AG04450 (cell line): ENCODE measurements at regions of chr6 and their contacts with region 1.

Region 1: DNA sequence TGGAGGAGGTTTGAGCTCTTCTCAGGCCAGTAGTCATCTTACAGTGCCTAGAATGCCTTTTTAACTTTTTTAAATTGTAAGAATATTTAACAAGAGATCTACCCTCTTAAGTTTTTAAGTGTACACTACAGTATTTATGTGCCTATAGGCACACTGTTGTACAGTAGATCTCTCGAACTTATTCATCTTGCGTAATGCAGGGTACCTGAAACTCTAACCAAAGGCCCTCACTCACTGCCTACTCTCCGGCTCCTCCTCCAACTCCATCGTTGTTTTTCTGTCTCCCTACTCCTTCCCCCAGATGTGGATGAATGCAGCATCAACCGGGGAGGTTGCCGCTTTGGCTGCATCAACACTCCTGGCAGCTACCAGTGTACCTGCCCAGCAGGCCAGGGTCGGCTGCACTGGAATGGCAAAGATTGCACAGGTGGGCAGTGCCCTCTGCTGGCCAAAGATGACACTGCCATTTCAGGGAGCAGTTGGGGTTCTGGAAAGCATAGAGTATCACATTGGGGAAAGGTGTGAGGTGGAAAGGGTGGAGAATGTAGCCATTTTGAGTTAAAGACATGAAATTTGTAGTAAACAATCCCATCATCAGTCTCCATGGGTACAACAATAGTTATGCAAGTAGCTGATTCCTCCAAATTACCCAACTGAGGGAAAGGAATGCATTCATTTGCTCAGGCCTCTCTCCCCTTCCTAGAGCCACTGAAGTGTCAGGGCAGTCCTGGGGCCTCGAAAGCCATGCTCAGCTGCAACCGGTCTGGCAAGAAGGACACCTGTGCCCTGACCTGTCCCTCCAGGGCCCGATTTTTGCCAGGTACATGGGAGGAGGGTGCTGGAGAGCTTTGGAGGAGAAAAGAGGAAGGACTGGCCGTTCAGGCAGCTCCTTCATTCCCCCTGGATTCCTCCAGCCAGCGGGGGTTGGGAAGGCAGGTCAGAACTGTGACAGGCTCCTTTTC is 18.4 kb upstream of the ZNF76 start:
- DNase-seq: no peak
- H3K4me3 ChIP-seq: no peak overlapping the region
- H3K27ac ChIP-seq: no peak overlapping the region
- H3K27me3 ChIP-seq: no peaks in the 10 kb centered on the region
- CTCF ChIP-seq: peak; percentile 97

Region 2: DNA sequence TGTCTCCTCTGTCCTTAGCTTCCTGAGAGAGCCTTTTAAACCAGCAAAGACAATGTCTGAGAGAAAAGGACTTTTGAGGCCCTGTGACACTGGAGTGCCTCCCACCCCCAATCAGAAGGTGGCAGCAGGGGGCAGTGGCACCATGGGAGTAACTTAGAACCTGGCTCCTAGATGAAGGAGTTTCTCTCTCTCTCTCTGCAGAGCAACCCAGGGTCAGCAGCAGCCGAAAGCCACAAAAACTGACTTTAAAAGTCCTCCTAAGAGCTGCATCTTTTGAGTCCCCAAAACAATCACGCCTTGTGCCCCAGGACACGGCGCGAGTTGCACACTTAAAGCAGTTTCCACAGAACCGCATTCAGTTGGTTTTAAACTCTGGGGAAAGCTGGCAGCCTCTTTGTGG is 94.7 kb before region 1 on chr6:
- CTCF ChIA-PET with region 1: interaction called, 62 read pairs
- POLR2A ChIA-PET with region 1: no interaction called
- DNase-seq: no peak
- H3K4me3 ChIP-seq: no peak overlapping the region
- H3K27ac ChIP-seq: no peak overlapping the region
- H3K27me3 ChIP-seq: no peaks in the 10 kb centered on the region
- CTCF ChIP-seq: peak; percentile 68

Region 3: DNA sequence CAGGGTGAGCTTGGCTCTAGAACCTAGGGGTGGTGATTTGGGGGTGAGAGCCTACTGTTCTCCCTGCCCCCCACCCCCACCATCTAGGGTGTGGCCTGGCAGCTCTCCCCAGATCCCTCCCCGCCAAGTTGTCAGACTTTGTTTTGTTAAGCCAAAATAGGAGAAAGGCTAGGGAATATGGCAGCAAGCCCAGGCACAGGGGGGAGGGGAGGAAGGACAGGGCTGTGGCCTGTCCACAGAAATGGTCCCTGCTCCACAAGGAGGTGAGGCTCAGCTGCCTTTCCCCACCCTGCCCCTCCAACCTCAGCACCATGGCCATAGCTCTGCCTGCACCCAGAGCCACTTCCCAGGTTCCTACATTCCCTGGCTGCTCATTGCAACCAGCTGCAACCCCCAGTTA is 10.2 kb before region 1 on chr6:
- CTCF ChIA-PET with region 1: interaction called, 50 read pairs
- POLR2A ChIA-PET with region 1: no interaction called
- DNase-seq: no peak
- H3K4me3 ChIP-seq: no peak overlapping the region
- H3K27ac ChIP-seq: no peak overlapping the region
- H3K27me3 ChIP-seq: no peaks in the 10 kb centered on the region
- CTCF ChIP-seq: no peak

Region 4: DNA sequence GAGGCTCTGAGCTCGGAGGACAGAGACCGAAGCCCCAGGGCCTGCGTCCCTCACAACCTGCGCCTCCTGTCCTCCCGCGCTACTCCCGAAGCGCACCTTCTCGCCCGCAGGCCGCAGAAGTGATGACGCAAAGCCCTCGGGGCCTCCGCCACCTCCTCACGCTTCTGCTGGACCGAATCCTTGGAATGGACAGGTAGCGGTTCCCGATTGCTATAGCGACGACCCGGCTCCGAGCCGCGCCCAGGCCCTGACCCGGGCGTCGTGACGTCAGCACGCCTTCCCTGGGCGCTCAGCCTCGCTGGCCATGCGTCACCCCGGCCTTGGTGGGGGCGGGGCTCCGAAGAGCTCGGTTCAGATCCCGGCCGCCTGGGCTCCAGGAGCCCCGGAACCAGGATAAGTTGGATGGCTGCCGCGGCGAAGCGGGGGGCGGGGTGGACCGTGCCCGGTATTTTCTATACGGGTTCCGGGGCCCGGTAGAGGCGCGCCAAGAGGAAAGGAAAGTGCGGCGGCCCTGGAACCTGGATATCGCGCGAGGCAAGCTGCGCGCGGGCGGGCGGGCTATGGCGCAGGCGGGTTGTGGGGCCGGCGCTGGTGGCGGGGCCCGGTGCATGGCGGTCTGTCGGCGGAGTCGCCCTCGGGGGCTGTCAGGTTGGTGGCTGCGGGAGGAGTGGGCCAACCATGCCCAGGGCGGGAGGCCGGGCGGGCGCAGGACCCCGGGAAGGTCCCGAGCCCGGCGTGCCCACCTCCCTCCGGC is 18.2 kb after region 1 on chr6 and contains the start of gene ZNF76:
- CTCF ChIA-PET with region 1: interaction called, 48 read pairs
- POLR2A ChIA-PET with region 1: no interaction called
- DNase-seq: peak; percentile 91
- H3K4me3 ChIP-seq: peak within 1 kb of the TSS; percentile 97
- H3K27ac ChIP-seq: peak within 1 kb of the TSS; percentile 92
- H3K27me3 ChIP-seq: no peaks in the 10 kb centered on the region
- CTCF ChIP-seq: no peak
- polyA plus RNA-seq, gene ZNF76: 10.2 and 14.3 TPM in 2 replicates